ENCODE measurements at regions of chr3 and their contacts with region 1.

Region 1: GRCh38 chr3:32177702-32178198 is 60.7 kb upstream of the CMTM8 start:
- DNase-seq: peak; percentile 68
- H3K4me3 Mint-ChIP-seq: no peak overlapping the region
- H3K27ac Mint-ChIP-seq: no peak overlapping the region
- H3K4me1 Mint-ChIP-seq: peaks cover 7% of the 10 kb centered on the region
- H3K27me3 Mint-ChIP-seq: peaks cover 16% of the 10 kb centered on the region

Region 2: DNA sequence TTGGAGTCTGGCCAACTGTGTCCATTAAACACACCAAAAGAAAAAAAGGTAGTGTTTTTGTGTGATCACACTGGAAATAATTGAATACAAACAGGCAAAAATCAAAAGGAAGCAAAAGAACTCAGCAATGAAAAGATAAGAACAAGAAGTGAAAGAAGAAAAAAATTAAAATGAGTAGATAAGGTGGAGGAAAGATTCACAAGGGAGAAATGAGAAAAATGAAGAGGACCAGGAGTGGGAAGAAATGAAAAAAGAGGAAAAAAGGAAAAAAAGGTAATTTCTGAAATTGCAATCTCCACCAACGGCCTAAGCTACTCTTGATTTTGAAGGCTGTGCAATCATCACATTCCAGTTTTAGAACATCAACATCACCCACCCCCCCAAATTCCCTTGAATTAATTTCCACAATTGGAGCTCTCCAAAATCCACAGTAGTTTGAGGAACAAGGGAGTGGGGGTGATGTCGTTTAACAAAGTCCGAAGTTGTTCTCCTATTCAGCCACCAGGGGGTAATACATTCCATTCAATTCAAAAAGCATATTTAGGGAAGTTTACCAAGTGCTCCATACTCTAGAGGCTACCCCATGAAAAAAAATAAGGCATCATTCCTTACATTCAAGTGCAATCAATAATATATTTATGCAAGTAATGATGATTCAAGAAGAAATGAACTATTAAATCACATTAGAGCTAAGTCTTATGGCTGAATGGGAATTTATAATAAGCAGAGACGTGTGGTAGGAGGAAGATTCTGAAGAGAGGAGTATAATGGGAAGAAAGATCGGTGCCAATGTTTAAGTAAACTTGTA is 158.8 kb before region 1 on chr3:
- CTCF ChIA-PET with region 1: interaction called, 13 read pairs
- DNase-seq: no peak
- H3K4me3 Mint-ChIP-seq: no peak overlapping the region
- H3K27ac Mint-ChIP-seq: no peak overlapping the region
- H3K4me1 Mint-ChIP-seq: no peaks in the 10 kb centered on the region
- H3K27me3 Mint-ChIP-seq: peaks cover 10% of the 10 kb centered on the region

Region 3: GRCh38 chr3:32283304-32283703 is 105.6 kb after region 1 on chr3:
- CTCF ChIA-PET with region 1: interaction called, 53 read pairs
- DNase-seq: no peak
- H3K4me3 Mint-ChIP-seq: no peak overlapping the region
- H3K27ac Mint-ChIP-seq: no peak overlapping the region
- H3K4me1 Mint-ChIP-seq: peaks cover 25% of the 10 kb centered on the region
- H3K27me3 Mint-ChIP-seq: no peaks in the 10 kb centered on the region

Region 4: GRCh38 chr3:32334675-32335074 is 156.9 kb after region 1 on chr3:
- CTCF ChIA-PET with region 1: interaction called, 48 read pairs
- DNase-seq: peak; percentile 79
- H3K4me3 Mint-ChIP-seq: no peak overlapping the region
- H3K27ac Mint-ChIP-seq: peak overlapping the region; percentile 10
- H3K4me1 Mint-ChIP-seq: peaks cover 49% of the 10 kb centered on the region
- H3K27me3 Mint-ChIP-seq: no peaks in the 10 kb centered on the region

Region 5: GRCh38 chr3:32347343-32348125 is 169.8 kb after region 1 on chr3:
- CTCF ChIA-PET with region 1: interaction called, 44 read pairs
- DNase-seq: no peak
- H3K4me3 Mint-ChIP-seq: no peak overlapping the region
- H3K27ac Mint-ChIP-seq: no peak overlapping the region
- H3K4me1 Mint-ChIP-seq: peaks cover 11% of the 10 kb centered on the region
- H3K27me3 Mint-ChIP-seq: no peaks in the 10 kb centered on the region

Measured in activated naive CD4-positive, alpha-beta T cell treated with anti-CD3 and anti-CD28 coated beads, Interleukin-2, amount 10 ng/mL, durations not matched to agents 7 days and 5 days (primary cell).